IMR-90 (cell line): ENCODE measurements at regions of chr3 and their contacts with region 1.

Region 1: GRCh38 chr3:192444096-192444790 is 283.1 kb downstream of the FGF12 start:
- DNase-seq: peak; percentile 53
- ATAC-seq: peak; percentile 97
- H3K4me3 ChIP-seq: no peak overlapping the region
- H3K27ac ChIP-seq: no peak overlapping the region
- H3K4me1 ChIP-seq: no peaks in the 10 kb centered on the region
- H3K27me3 ChIP-seq: no peaks in the 10 kb centered on the region
- CTCF ChIP-seq: peak; percentile 98
- POLR2A ChIP-seq: 0 out of 2 replicates have a peak, but pooled peaks have one; percentile 33
- RAD21 ChIP-seq: peak; percentile 97

Region 2: GRCh38 chr3:190811775-190812480 is 1632.3 kb before region 1 on chr3:
- CTCF ChIA-PET with region 1: interaction called, 5 read pairs
- POLR2A ChIA-PET with region 1: no interaction called
- dilution Hi-C with region 1: no loop called
- in situ Hi-C with region 1: loop called (anchors 25 kb)
- intact Hi-C with region 1: loop called (anchors 1 kb)
- DNase-seq: peak; percentile 60
- ATAC-seq: peak; percentile 68
- H3K4me3 ChIP-seq: no peak overlapping the region
- H3K27ac ChIP-seq: no peak overlapping the region
- H3K4me1 ChIP-seq: no peaks in the 10 kb centered on the region
- H3K27me3 ChIP-seq: peaks cover 2% of the 10 kb centered on the region; the same call in 1 of the 2 replicates
- CTCF ChIP-seq: peak; percentile 71
- POLR2A ChIP-seq: no peak
- RAD21 ChIP-seq: peak; percentile 55; the same call in 1 of the 2 replicates

Region 3: DNA sequence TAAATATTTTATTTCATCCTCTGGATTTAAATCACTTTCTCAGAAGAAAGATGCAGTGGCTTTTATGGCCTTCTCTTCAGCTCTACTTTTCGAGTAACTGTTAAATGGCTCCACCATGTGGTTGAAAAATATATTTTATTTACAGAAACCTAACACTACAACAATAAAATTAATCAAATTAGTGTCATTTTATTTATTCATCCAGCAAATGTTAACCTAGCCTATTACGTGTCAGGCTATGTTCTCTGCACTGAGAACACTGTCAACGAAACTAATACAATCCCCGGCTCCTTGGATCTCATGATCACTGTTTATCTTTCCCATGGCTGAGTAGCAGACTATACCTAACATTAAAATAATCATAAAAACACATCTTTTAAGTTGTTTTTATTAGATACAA is 1393.2 kb before region 1 on chr3:
- CTCF ChIA-PET with region 1: interaction called, 4 read pairs
- POLR2A ChIA-PET with region 1: no interaction called
- dilution Hi-C with region 1: no loop called
- in situ Hi-C with region 1: no loop called
- intact Hi-C with region 1: loop called (anchors 5 kb)
- DNase-seq: peak; percentile 47
- ATAC-seq: peak; percentile 85
- H3K4me3 ChIP-seq: no peak overlapping the region
- H3K27ac ChIP-seq: no peak overlapping the region
- H3K4me1 ChIP-seq: no peaks in the 10 kb centered on the region
- H3K27me3 ChIP-seq: no peaks in the 10 kb centered on the region
- CTCF ChIP-seq: peak; percentile 70
- POLR2A ChIP-seq: no peak
- RAD21 ChIP-seq: peak; percentile 63

Region 4: GRCh38 chr3:191244242-191244867 is 1199.9 kb before region 1 on chr3:
- CTCF ChIA-PET with region 1: interaction called, 4 read pairs
- POLR2A ChIA-PET with region 1: no interaction called
- dilution Hi-C with region 1: no loop called
- in situ Hi-C with region 1: no loop called
- intact Hi-C with region 1: loop called (anchors 1 kb)
- DNase-seq: peak; percentile 35
- ATAC-seq: 0 out of 2 replicates have a peak, but pooled peaks have one; percentile 59
- H3K4me3 ChIP-seq: no peak overlapping the region
- H3K27ac ChIP-seq: no peak overlapping the region
- H3K4me1 ChIP-seq: peaks cover 2% of the 10 kb centered on the region; the same call in 1 of the 2 replicates
- H3K27me3 ChIP-seq: no peaks in the 10 kb centered on the region
- CTCF ChIP-seq: peak; percentile 59
- POLR2A ChIP-seq: no peak
- RAD21 ChIP-seq: peak; percentile 63

Region 5: GRCh38 chr3:192188218-192188835 is 255.9 kb before region 1 on chr3:
- CTCF ChIA-PET with region 1: no interaction called
- POLR2A ChIA-PET with region 1: no interaction called
- dilution Hi-C with region 1: no loop called
- in situ Hi-C with region 1: no loop called
- intact Hi-C with region 1: loop called (anchors 1 kb)
- DNase-seq: peak; percentile 4
- ATAC-seq: no peak
- H3K4me3 ChIP-seq: no peak overlapping the region
- H3K27ac ChIP-seq: no peak overlapping the region
- H3K4me1 ChIP-seq: no peaks in the 10 kb centered on the region
- H3K27me3 ChIP-seq: no peaks in the 10 kb centered on the region
- CTCF ChIP-seq: peak; percentile 31; the same call in 1 of the 2 replicates
- POLR2A ChIP-seq: no peak
- RAD21 ChIP-seq: no peak